CD4-positive, alpha-beta memory T cell (primary cell): ENCODE measurements at regions of chrX and their contacts with region 1.

Region 1: DNA sequence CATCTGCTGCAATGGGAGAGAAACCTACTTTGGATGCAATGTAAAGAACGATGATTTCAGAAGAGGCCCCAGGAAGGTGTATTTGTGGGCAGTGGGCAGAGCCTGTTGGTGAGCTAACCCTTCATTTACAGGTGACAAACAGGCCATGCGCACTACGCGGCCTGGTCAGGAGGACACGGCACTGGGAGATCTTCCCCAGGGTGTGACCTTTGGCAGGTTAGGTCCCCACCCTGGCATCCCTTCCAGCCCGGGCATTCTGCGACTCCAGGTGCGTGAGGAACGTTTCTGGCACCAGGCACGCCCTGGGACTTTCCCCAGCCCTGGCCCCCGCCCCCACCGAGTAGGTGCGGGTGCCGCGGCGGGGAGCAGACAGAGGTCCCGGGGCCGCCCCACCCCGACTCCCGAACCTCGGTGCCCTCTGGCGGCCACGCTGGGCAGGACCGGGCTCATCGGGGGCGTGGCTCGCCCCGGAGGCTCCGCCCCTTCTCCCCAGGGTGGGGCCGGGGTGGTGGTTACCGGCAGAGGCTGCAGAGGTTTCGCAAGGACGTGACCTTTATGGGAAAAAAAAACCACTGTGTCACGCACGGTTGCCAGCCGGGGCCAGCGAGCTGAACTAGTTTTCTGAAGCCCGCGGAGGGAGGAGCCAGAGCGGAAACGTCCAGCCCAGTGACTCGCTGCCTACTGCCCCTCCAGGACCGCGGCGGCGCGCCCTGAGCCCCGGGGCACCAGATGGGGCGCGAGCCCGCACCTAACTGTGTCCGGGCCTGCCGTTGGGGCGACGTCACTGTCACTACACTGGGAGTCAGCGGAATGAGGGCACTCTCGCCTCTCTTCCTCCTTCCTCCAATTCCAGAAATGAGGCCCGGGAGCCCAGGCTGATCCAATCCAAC is 5.0 kb upstream of the NYX start:
- DNase-seq: peak; percentile 85 to 93 (median 90)
- H3K4me3 ChIP-seq: peak overlapping the region in 1 of 2 donors; percentile 41
- H3K4me3 Mint-ChIP-seq: peak overlapping the region; percentile 54 to 75 (median 71)
- H3K27ac ChIP-seq: no peak overlapping the region
- H3K27ac Mint-ChIP-seq: peak overlapping the region; percentile 55 to 82 (median 79)
- H3K4me1 ChIP-seq: peaks cover 6% of the 10 kb centered on the region
- H3K4me1 Mint-ChIP-seq: peaks cover 4 to 15% (median 6%) of the 10 kb centered on the region in 4 donors
- H3K27me3 ChIP-seq: no peaks in the 10 kb centered on the region
- H3K27me3 Mint-ChIP-seq: no peaks in the 10 kb centered on the region

Region 2: DNA sequence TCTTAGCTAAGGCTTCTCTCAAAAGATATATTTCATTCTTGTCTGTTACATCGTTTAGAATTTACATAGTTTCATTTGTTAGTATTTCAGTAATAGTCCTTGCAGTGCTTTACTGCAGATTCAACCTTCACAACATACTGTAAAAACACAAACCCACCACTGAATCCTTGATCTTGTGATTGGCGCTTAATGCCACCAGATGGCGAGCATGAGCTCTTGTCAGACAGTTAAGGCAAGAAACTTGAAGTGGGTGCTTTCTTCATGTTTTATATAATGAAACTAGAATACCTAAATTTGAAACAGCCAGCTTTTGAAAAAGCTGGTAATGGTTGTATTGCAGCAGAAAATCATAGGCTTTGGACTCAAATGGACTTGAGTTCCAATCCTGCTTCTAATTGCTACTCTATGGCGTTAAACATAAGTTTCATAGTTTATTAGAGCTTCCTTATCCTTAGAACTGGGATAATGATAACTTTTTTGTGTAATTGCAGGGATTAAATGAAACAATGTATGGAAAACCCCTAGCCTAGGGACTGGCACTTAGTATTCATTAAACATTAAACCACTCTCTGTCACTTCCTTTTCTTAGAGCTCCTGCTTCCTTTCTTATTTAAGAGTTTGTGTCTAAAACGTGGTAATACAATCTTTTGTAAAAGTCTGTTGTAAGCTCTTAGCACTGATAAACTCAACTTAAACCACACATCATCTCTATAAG is 261.8 kb before region 1 on chrX:
- CTCF ChIA-PET with region 1: no interaction called
- POLR2A ChIA-PET with region 1: interaction called, 5 read pairs
- intact Hi-C with region 1: loop called (anchors 1 kb)
- DNase-seq: peak; percentile 47 to 60 (median 55)
- H3K4me3 ChIP-seq: no peak overlapping the region
- H3K4me3 Mint-ChIP-seq: peak overlapping the region in 2 of 8 donors; percentile 30 to 32
- H3K27ac ChIP-seq: no peak overlapping the region
- H3K27ac Mint-ChIP-seq: peak overlapping the region in 6 of 7 donors; percentile 0 to 41 (median 28)
- H3K4me1 ChIP-seq: peaks cover 21% of the 10 kb centered on the region
- H3K4me1 Mint-ChIP-seq: peaks cover 32 to 48% (median 40%) of the 10 kb centered on the region in 4 donors
- H3K27me3 ChIP-seq: no peaks in the 10 kb centered on the region
- H3K27me3 Mint-ChIP-seq: no peaks in the 10 kb centered on the region

Region 3: DNA sequence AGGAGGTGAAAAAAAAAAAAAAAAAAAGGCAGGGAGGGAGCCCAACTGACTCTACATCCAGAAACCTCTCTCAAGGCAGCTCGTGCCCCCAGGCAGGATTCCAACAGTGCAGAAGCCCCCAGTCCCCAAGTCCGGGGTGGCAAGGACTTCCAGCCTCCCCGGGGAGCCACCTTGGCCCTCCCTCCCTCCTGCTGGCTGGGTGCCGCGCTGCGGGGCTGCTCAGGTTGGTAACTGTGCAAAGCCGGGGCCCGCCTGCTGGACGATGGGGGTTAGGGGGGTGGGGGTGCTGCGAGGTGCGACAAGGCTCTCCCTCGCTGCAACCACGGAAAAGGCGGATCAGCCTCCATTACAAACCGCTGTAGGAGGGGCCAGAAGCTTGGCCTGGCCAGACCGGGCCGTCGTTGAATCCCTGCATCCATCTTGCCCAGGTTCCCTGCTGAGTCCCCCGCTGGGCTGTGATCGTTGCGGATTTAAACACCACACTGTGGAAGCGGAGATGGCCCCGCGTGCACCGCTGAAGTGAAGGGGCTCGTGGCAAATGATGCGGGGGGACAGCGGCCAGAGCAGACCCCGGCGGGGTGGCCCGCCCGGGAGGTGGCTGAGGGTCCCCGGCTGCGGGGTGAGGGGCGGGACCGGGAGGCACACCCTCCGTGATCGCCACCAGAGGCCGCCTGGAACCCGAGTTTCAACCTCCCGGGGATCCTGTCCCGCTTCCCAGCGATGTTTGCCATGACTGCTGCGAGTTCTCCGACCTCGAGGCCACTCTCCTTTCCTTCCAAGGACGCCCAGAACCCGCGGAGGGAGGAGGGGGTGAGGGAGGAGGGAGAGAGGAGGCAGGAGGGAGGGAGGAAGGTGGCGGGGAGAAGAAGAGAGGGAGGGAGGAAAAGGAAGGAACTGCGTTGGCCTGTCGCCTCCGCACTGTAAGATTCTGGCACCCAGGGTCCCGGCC is 166.2 kb before region 1 on chrX:
- CTCF ChIA-PET with region 1: no interaction called
- POLR2A ChIA-PET with region 1: interaction called, 3 read pairs
- intact Hi-C with region 1: loop called (anchors 1 kb)
- DNase-seq: peak; percentile 30 to 55 (median 47)
- H3K4me3 ChIP-seq: peak overlapping the region in 1 of 2 donors; percentile 38
- H3K4me3 Mint-ChIP-seq: peak overlapping the region; percentile 76 to 83 (median 82)
- H3K27ac ChIP-seq: no peak overlapping the region
- H3K27ac Mint-ChIP-seq: peak overlapping the region in 6 of 7 donors; percentile 36 to 72 (median 56)
- H3K4me1 ChIP-seq: peaks cover 5% of the 10 kb centered on the region
- H3K4me1 Mint-ChIP-seq: peaks cover 0 to 16% (median 2%) of the 10 kb centered on the region in 4 donors
- H3K27me3 ChIP-seq: no peaks in the 10 kb centered on the region
- H3K27me3 Mint-ChIP-seq: no peaks in the 10 kb centered on the region

Region 4: DNA sequence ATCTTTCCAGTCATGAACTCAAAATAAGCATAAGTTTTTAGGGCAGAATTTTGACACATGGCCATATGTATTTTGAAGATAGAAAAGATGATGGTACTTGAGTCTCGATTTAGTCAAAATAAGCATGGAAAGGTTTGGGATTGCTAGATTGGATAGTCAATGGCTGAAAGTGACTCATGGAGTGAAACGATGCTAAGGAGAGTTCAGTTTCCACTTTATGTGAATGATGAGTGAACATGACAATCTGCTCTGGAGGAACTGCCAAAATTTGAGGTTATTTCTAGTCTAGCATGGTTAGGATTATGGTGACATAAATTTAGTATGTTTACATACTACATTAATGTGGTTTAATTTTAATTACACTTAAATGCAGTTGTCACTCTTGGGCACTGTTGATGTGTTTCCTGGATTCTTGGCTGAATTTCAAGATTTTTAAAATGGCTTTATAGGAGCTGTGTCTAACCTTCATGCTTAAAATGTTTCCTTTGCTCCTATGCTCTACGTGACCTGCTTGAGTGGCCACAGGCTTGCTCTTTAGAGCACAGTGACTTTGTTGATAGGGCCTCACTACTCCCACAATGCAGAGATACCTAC is 91.1 kb before region 1 on chrX:
- CTCF ChIA-PET with region 1: interaction called, 3 read pairs
- POLR2A ChIA-PET with region 1: interaction called, 4 read pairs
- intact Hi-C with region 1: loop called (anchors 5 kb)
- DNase-seq: peak in 1 of 5 donors; percentile 22
- H3K4me3 ChIP-seq: no peak overlapping the region
- H3K4me3 Mint-ChIP-seq: peak overlapping the region in 3 of 8 donors; percentile 24 to 44 (median 31)
- H3K27ac ChIP-seq: no peak overlapping the region
- H3K27ac Mint-ChIP-seq: peak overlapping the region; percentile 8 to 84 (median 47)
- H3K4me1 ChIP-seq: peaks cover 23% of the 10 kb centered on the region
- H3K4me1 Mint-ChIP-seq: peaks cover 23 to 52% (median 42%) of the 10 kb centered on the region in 4 donors
- H3K27me3 ChIP-seq: no peaks in the 10 kb centered on the region
- H3K27me3 Mint-ChIP-seq: no peaks in the 10 kb centered on the region

Region 5: DNA sequence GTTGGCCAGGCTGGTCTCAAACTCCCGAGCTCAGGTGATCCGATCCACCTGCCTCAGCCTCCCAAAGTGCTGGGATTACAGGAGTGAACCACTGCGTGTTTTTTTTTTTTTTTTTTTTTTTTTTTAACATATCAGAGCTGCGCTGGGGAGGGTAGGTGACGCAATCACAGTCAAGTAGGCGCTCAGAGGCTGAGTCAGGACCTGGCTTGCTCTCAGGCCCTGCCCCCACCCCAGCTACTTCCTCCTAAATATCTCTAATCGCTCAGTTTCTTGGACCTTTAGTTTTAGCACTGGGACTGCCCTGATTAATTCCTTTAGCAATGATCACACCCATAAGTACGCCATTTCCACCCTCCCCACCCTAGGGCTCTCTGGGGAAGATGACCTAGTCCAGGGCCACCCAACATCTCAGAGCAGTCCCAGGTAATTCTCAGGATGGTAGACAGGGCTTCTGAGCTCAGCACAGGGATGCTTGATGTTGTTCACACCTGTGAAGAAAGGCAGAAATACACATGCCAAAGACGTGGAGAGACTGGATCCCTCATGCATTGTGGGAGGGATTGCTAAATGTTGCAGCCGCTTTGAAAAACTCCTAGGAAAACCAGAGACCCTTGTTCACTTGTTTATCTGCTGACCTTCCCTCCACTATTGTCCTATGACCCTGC is 58.0 kb before region 1 on chrX:
- CTCF ChIA-PET with region 1: interaction called, 3 read pairs
- POLR2A ChIA-PET with region 1: interaction called, 25 read pairs
- intact Hi-C with region 1: loop called (anchors 2 kb)
- DNase-seq: peak; percentile 33 to 79 (median 53)
- H3K4me3 ChIP-seq: no peak overlapping the region
- H3K4me3 Mint-ChIP-seq: peak overlapping the region; percentile 53 to 92 (median 80)
- H3K27ac ChIP-seq: no peak overlapping the region
- H3K27ac Mint-ChIP-seq: peak overlapping the region; percentile 58 to 97 (median 94)
- H3K4me1 ChIP-seq: peaks cover 21% of the 10 kb centered on the region
- H3K4me1 Mint-ChIP-seq: peaks cover 12 to 21% (median 15%) of the 10 kb centered on the region in 4 donors
- H3K27me3 ChIP-seq: no peaks in the 10 kb centered on the region
- H3K27me3 Mint-ChIP-seq: no peaks in the 10 kb centered on the region